ENCODE measurements at regions of chr10 and their contacts with region 1.

Region 1: DNA sequence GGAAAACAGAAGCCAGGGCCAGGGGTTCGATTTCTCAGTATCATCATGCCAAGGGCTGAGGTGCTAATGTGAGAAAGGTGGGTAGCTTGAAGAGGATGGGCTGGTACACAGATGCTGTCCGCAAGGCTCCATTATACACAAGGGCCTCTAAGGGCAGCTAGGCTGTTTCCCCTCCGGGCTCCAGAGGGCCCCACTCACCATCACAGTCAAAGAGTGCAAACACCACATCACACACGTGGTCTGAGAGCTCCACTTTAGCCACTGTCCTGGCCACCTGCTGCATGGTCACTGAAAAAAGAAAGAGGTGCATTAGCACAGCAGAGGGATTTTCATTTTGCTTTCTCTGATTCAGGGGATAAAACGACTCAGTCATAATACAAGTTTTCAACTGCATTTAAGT is 20.9 kb upstream of the DNAJB12 start:
- DNase-seq: no peak
- H3K4me3 ChIP-seq: no peak overlapping the region
- H3K27ac ChIP-seq: no peak overlapping the region
- H3K4me1 ChIP-seq: no peaks in the 10 kb centered on the region
- H3K27me3 ChIP-seq: no peaks in the 10 kb centered on the region
- CTCF ChIP-seq: peak in 1 of 2 donors; percentile 7

Region 2: DNA sequence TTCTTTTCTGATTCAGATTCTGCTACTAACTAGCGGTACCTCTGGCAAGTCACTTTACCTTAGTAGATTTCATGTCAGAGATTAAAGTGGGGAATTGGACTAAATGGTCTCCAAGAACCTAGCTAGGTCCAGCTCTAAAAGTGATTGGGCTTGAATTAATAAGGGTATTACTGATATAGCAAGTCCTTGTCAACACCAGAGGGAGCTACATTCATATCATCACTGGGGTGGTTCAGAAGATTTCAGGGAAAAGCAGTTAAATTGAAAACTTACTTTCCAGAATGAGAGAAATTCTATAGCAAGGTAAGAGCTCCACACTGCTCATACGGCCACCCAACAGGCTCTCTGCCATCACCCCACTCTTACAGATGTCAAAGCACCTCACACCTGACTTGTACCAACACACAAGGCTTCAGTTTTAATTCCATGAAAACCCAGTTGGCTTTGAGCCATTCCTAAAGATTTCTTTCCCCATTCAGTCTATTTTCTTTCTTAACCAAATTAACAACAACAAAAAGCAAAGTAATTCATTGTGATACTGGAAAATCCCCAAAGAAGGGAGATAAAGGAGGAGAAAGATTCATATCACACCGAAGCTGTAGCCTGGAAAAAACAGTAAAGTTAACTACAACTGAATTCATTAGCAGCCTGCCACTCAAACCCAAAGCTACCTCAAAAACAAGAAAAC is 249.3 kb before region 1 on chr10:
- CTCF ChIA-PET with region 1: no interaction called
- dilution Hi-C with region 1: no loop called
- in situ Hi-C with region 1: no loop called
- intact Hi-C with region 1: no loop called
- DNase-seq: peak; percentile 25
- H3K4me3 ChIP-seq: no peak overlapping the region
- H3K27ac ChIP-seq: no peak overlapping the region
- H3K4me1 ChIP-seq: no peaks in the 10 kb centered on the region
- H3K27me3 ChIP-seq: no peaks in the 10 kb centered on the region
- CTCF ChIP-seq: peak; percentile 36 to 51

Region 3: DNA sequence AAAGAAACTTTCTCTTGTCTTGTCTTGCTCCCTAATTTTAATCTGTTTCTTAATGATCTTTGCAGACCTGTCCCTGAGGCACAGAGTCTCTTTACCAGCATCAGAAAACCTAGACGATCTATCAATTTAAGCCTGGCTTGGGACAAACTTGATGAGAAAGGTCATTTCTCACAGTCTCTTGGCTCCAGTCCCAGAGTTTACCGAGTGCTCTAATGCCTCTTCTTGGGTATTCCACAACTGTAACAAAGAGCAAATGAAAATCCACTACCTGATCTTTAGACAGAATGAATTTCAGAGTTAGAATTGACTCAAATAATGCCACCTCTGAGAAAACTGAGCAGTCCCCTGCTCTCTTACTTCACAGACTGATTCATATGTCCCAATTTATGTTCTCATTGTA is 85.5 kb after region 1 on chr10:
- CTCF ChIA-PET with region 1: no interaction called
- dilution Hi-C with region 1: loop called (anchors 5 kb)
- in situ Hi-C with region 1: no loop called
- intact Hi-C with region 1: no loop called
- DNase-seq: no peak
- H3K4me3 ChIP-seq: no peak overlapping the region
- H3K27ac ChIP-seq: no peak overlapping the region
- H3K4me1 ChIP-seq: peaks cover 3% of the 10 kb centered on the region
- H3K27me3 ChIP-seq: no peaks in the 10 kb centered on the region
- CTCF ChIP-seq: no peak

Region 4: DNA sequence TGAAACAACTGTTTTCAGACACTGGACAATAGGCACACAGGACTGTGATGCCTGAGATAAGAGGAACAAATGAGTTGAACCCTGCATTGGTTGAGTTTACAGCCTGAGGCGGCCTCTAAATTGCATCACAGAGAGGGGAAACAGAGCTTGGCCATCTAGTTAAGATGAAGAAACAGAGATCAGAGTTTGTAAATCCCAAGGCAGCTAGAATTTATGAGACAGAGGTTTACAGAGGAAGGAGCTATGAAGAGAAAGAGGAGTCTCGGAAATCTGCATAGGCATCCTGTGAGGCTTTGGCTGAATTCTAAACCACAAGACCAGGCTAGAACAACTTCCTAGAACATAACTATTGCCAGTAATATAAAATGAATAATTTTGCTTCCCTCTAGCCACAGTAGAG is 476.9 kb after region 1 on chr10:
- CTCF ChIA-PET with region 1: no interaction called
- dilution Hi-C with region 1: loop called (anchors 10 kb)
- in situ Hi-C with region 1: no loop called
- intact Hi-C with region 1: no loop called
- DNase-seq: no peak
- H3K4me3 ChIP-seq: no peak overlapping the region
- H3K27ac ChIP-seq: no peak overlapping the region
- H3K4me1 ChIP-seq: peaks cover 4% of the 10 kb centered on the region
- H3K27me3 ChIP-seq: no peaks in the 10 kb centered on the region
- CTCF ChIP-seq: no peak